Stomach (tissue), 19 donors: ENCODE measurements at regions of chr12 and their contacts with region 1.

Region 1: DNA sequence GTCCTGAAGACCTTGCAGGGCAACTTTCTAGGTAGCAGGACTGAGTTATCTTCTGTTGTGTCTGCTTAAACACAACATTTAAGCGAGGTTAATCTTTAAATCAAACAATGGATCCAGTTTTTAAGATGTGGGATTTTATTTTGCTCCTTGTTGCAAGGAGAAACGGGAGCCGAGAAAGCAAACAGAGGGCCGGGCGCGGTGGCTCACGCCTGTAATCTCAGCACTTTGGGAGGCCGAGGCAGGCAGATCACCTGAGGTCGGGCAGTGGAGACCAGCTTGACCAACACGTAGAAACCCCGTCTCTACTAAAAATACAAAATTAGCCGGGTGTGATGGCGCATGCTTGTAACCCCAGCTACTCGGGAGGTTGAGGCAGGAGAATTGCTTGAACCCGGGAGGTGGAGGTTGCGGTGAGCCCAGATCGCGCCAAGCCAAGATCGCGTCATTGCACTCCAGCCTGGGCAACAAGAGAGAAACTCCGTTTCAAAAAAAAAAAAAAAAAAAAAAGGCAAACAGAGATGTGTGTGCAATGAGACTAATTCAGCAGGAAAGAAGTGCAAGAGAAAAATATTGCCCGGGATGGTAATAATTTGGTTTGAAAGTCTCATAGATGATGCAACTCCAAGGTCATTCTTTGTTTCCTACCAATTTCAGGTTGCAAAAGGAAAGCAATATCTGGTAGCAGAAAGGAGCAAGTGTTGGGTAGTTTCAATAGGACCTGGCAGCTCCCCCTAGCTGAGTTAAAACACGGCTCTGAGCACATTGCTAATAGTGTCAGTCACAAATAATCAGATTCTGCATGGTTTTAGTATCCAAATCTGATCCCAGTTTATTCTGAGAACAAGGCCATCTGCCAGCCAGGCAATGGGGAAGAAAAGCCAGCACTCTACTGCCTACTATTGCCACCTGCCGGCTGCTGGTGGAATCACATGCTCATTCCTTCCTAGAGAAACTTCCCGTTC is 141.4 kb downstream of the PPM1H start:
- DNase-seq: peak; percentile 88 to 92
- H3K4me3 ChIP-seq: no peak overlapping the region
- H3K27ac ChIP-seq: no peak overlapping the region
- H3K4me1 ChIP-seq: peaks cover 3 to 27% (median 8%) of the 10 kb centered on the region in 4 donors
- H3K27me3 ChIP-seq: no peaks in the 10 kb centered on the region
- CTCF ChIP-seq: peak in 6 of 7 experiments; percentile 51 to 97 (median 96)
- EP300 ChIP-seq: no peak
- POLR2A ChIP-seq: no peak

Region 2: DNA sequence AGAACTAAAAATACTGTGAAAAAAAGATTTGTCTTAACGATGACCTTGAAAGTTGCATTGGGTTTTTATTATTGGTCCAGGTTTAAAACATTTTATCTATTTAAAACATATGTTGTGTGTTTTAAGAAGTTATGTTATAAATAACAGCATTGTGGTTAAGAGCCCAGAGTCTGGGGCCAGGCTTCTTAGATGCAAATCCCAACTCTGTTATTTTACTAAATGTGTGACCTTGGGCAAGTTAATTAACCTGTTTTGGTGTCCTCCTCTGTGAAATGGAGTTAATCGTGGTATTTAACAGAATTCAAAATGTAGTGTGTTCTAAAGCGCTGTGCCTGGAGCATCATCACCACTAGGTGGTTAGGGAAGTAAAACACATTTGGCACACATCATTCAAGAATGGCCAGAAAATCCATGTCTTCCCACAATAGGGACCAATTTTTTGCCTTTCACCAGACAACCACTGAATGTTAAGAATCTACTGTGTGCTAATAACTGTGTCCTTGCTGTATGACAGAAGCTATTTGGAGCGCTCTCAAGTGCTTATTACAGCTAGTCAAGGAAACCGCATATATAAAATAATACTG is 193.6 kb before region 1 on chr12:
- intact Hi-C with region 1: loop called (anchors 5 kb)
- DNase-seq: no peak
- H3K4me3 ChIP-seq: no peak overlapping the region
- H3K27ac ChIP-seq: no peak overlapping the region
- H3K4me1 ChIP-seq: peaks cover 3 to 24% (median 17%) of the 10 kb centered on the region in 4 donors
- H3K27me3 ChIP-seq: no peaks in the 10 kb centered on the region
- CTCF ChIP-seq: peak in 2 of 7 experiments; percentile 7 to 10
- EP300 ChIP-seq: no peak
- POLR2A ChIP-seq: no peak